CD8-positive, alpha-beta T cell (primary cell): ENCODE measurements at regions of chr17 and their contacts with region 1.

Region 1: DNA sequence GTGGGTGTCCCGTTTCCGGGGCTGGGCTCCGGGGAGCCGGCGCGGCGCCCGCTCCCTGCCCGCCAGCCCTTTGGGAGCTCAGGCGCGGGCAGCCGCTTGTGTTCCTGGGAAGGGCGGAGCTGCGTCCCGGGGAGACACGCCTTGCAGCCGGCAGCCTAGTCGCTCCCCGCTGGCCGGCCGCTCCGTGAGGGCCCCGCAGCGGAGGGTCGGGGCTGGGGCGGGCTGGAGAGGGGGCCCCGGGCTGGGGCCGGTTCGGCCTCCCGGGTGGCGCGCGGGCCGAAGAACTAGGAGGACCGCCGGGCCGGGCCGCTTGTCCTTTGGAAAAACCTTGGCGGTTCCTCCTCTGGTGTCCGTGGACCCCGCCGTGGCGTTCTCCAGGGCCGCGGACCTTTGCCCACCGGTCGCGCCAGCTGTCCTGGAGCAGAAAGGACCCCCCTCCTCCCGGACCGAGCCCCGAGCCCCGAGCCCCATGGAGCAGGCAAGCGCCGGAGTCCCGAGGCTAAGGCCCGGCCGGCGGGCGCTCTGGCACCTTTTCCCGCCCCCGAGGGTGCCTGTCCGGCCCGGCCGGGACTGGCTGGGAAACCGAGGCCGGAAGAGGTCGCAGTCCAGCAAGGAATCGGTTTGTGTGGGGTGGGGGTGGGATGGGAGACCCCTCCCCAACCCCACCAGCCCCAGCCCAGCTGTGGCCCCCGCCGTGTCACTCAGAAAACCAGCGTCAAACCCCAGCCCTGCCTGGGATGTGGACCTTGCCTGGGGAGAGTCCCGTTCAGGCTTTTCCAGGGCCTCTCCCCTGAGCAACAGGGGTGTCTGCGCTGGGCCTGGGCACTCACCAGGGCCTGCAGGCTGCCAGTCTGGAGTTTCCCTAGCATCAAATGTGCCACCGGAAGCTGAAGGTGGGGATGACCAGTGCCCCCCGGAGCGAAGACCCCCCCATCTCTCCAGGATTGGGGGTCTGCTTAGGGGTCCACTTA is 6.8 kb upstream of the TBC1D3B start:
- DNase-seq: peak in 1 of 9 experiments; percentile 70
- ATAC-seq: peak; percentile 35
- H3K4me3 ChIP-seq: peak overlapping the region; percentile 23 to 90
- H3K4me3 Mint-ChIP-seq: peak overlapping the region; percentile 81
- H3K27ac ChIP-seq: peak overlapping the region; percentile 35 to 93
- H3K27ac Mint-ChIP-seq: peak overlapping the region; percentile 73
- H3K4me1 ChIP-seq: peaks cover 3% of the 10 kb centered on the region
- H3K4me1 Mint-ChIP-seq: peaks cover 30% of the 10 kb centered on the region
- H3K27me3 ChIP-seq: no peaks in the 10 kb centered on the region
- H3K27me3 Mint-ChIP-seq: peaks cover 10% of the 10 kb centered on the region
- CTCF ChIP-seq: no peak

Region 2: DNA sequence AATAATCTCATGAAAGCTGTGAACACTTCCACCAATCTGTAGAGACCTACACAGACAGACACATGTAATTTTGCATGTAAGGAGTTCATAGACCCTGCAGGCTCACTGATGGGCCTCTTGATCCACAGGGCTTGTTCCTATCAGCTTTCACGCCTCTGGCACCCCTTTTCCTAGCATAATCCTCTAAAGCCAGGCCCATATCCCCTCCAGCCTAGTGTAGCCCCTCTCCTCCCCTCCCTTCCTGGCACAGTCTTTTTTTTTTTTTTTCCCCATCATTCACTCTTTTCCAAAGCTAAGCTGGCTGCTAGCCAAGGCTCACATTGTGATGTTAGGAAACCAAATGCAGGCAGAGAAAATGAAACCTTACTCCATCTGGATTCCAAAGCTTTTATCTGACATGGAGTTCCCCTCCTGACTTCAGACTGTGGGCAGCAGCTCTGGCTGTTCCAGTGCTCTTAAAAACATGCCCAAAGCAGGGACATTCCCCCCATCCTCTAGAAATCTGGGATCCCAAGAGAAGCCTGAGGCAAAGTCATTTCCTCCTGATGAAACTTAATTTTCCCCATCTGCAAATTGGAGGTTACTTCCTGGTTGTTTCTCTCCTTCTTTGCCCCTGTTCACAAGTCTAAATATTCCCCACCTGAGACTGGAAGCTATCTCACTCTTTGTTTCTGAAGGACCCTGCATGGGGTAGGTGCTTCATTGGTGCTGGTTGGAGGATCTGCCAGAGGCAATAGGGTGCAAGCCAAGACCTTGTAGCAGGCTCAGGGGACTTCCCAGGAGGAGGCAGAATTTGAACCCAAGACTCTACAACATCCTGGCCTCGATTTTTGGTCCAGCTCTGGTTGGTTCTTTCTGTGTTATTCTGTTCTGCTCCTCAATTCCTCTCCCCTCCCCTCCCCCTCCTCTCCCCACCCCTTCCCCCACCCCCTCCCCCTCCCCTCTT is 293.2 kb before region 1 on chr17:
- CTCF ChIA-PET with region 1: no interaction called
- POLR2A ChIA-PET with region 1: no interaction called
- intact Hi-C with region 1: loop called in 1 of 2 experiments (anchors 10 kb)
- DNase-seq: peak in 2 of 9 experiments; percentile 51 to 73
- ATAC-seq: peak; percentile 30
- H3K4me3 ChIP-seq: no peak overlapping the region
- H3K4me3 Mint-ChIP-seq: peak overlapping the region; percentile 49
- H3K27ac ChIP-seq: peak overlapping the region in 1 of 2 experiments; percentile 72
- H3K27ac Mint-ChIP-seq: peak overlapping the region; percentile 91
- H3K4me1 ChIP-seq: peaks cover 44% of the 10 kb centered on the region
- H3K4me1 Mint-ChIP-seq: peaks cover 57% of the 10 kb centered on the region
- H3K27me3 ChIP-seq: no peaks in the 10 kb centered on the region
- H3K27me3 Mint-ChIP-seq: no peaks in the 10 kb centered on the region
- CTCF ChIP-seq: no peak

Region 3: DNA sequence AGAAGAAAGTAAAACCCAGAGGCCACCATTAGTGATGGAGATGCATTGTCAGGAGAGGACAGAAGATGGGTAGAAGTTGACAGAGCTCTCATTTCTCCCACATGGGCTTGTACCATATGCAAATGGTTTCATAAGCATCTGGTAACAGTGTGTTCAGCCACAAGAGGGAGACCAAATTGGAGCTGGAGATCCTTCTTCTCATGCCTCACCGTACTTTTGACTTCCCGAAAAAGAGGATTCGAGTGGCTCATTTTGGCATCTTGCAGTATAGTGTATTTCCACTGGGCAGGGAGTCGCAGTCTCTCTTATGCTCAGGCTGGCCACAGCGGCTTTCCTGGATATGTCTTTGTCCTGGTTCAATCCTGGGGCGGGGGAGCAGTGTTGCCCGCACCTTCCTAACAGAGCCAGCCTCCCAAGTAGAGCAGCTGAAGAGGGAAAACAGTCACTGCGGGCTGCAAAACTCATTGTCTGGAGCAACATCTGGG is 30.6 kb before region 1 on chr17:
- CTCF ChIA-PET with region 1: no interaction called
- POLR2A ChIA-PET with region 1: no interaction called
- intact Hi-C with region 1: no loop called
- DNase-seq: no peak
- ATAC-seq: no peak
- H3K4me3 ChIP-seq: no peak overlapping the region
- H3K4me3 Mint-ChIP-seq: no peak overlapping the region
- H3K27ac ChIP-seq: no peak overlapping the region
- H3K27ac Mint-ChIP-seq: no peak overlapping the region
- H3K4me1 ChIP-seq: no peaks in the 10 kb centered on the region
- H3K4me1 Mint-ChIP-seq: peaks cover 11% of the 10 kb centered on the region
- H3K27me3 ChIP-seq: no peaks in the 10 kb centered on the region
- H3K27me3 Mint-ChIP-seq: peaks cover 20% of the 10 kb centered on the region
- CTCF ChIP-seq: no peak